ENCODE measurements at regions of chr11 and their contacts with region 1.

Region 1: DNA sequence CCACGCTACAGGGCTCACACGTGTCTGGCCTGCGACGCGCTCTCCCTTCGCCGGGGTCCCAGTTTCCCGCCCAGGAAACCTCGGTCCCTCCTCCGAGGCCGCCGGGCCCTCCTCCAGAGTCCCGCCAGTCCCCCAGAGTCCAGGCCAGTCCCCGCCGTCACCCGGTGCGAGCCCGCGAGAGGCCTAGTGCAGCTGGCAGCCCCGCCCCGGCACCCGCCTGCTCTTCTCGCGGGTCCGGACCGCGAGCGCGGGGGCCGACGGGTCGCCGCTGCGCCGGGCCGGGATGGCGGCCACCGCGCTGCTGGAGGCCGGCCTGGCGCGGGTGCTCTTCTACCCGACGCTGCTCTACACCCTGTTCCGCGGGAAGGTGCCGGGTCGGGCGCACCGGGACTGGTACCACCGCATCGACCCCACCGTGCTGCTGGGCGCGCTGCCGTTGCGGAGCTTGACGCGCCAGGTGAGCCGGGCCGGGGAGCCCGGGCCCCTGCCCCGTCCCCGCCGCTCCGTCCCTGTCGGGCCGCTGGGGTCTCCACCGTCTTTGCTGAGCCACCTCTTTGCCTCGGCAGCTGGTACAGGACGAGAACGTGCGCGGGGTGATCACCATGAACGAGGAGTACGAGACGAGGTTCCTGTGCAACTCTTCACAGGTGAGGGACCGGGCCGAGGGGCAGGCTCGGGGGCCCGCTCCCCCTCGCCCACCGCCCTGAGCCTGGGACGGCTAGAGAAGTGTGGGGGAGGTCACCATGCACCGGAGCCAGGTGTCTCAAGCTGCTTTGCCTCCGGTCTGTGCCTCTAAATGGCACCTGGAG is at the start of gene PTPMT1:
- DNase-seq: peak; percentile 50
- H3K4me3 Mint-ChIP-seq: peak within 1 kb of the TSS; percentile 73
- H3K27ac Mint-ChIP-seq: no peak within 1 kb of the TSS
- H3K4me1 Mint-ChIP-seq: peaks cover under 1% of the 10 kb centered on the region
- H3K27me3 Mint-ChIP-seq: no peaks in the 10 kb centered on the region
- CTCF ChIP-seq: no peak
- total RNA-seq, gene PTPMT1: 44.6 and 49.0 TPM in 2 replicates

Region 2: DNA sequence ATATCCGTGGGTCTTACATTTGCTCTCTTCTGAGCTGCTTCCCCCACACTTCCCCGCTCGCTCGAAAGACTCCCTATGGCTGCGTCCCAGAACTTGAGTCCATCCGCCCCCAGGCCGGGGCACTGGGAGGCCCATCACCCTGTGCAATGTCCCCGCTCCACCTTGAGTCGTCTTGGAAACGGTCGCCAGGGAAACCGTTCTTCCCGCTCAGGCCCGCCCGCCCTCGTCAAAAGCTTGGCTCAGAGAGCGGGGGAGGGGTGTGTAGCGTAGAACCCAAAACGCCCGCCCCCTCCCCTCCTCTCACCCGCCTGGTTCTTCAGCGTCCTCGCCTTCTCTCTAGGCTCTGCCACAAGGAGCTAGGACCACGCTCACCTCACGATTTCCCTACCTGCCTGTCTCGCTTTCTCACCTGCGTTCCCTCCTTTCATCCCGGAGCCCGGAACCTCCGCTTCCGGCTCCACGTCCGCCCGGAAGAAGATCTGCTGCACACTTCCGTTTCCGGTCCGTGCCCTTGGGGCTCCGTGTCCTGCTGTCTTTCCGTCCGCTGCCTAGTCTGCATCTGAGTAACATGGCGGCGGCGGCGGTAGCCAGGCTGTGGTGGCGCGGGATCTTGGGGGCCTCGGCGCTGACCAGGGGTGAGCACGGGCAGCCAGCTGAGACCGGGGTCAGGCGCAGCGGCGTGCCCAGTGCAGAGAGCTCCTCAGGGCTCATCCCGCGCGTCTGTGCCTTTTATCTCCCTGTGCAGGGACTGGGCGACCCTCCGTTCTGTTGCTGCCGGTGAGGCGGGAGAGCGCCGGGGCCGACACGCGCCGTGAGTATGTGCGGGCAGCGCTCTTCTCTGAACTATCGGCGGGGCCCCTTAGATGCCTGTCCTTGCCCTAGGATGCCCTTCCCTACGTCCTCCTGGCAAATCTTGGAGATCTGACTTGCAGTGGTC is 13.2 kb after region 1 on chr11 and contains the starts of genes KBTBD4 and NDUFS3:
- CTCF ChIA-PET with region 1: interaction called, 6 read pairs
- POLR2A ChIA-PET with region 1: interaction called, 48 read pairs
- intact Hi-C with region 1: no loop called
- DNase-seq: peak; percentile 89
- H3K4me3 Mint-ChIP-seq: peak within 1 kb of the TSS; percentile 93
- H3K27ac Mint-ChIP-seq: peak within 1 kb of the TSS; percentile 93
- H3K4me1 Mint-ChIP-seq: peaks cover 13% of the 10 kb centered on the region
- H3K27me3 Mint-ChIP-seq: no peaks in the 10 kb centered on the region
- CTCF ChIP-seq: no peak
- total RNA-seq, gene KBTBD4: 8.4 and 12.6 TPM in 2 replicates
- total RNA-seq, gene NDUFS3: 117 and 120 TPM in 2 replicates

Region 3: GRCh38 chr11:47593492-47593933 is 28.0 kb after region 1 on chr11:
- CTCF ChIA-PET with region 1: no interaction called
- POLR2A ChIA-PET with region 1: no interaction called
- intact Hi-C with region 1: no loop called
- DNase-seq: no peak
- H3K4me3 Mint-ChIP-seq: no peak overlapping the region
- H3K27ac Mint-ChIP-seq: no peak overlapping the region
- H3K4me1 Mint-ChIP-seq: no peaks in the 10 kb centered on the region
- H3K27me3 Mint-ChIP-seq: peaks cover 34% of the 10 kb centered on the region
- CTCF ChIP-seq: no peak